ENCODE measurements at regions of chr12 and their contacts with region 1.

Region 1: GRCh38 chr12:117226464-117226863 is 36.2 kb upstream of the FBXO21 start:
- DNase-seq: no peak
- CTCF ChIP-seq: no peak

Region 2: DNA sequence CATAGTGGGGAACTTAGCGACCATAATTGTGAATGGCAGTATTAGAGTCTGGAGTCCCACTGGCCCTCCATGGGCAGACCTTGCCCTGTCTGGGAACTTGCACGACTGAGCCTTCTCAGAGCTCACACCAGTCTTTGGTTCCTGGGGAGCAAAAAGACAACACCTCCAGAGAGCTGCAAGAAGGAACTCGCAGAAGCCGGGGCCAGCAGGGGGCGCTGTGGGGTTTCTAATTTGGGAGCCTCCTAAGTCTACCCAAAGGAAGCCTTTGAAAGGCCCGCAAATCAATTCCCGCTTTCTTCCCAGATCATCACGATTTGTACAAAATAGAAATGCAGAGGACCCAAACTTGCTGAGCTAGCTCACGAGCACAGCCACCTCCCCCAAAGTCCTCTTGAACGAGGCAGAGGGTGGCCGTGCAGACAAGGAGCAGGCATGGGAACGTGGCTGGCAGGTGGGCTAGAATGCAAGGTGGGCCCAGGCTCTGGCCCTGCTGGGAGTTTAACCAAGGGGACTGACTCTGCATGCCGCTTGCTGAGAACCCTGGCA is 10.1 kb after region 1 on chr12:
- CTCF ChIA-PET with region 1: interaction called, 11 read pairs
- POLR2A ChIA-PET with region 1: no interaction called
- DNase-seq: peak; percentile 75
- CTCF ChIP-seq: peak; percentile 68

Measured in GM10248 (cell line).